B cell (primary cell): ENCODE measurements at regions of chr14 and their contacts with region 1.

Region 1: DNA sequence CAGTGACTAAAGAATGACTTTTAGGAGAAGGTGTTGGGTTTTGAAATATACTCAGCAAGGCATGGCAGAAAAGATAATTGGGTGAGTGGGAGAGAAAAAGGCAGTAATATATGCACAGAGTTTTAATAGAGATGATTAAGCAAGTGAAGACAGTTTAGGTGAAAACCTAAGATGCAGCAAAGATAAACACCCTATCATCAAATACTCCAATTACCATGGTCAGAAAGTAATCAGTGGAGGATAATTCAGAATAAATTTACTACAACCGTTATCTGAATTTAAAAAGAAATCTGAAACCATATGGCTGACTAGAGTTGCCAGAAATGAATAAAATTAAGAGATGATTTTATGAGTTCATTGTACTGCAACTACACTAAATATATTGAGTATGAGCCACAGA is 26.8 kb downstream of the NAA30 start:
- DNase-seq: no peak
- ATAC-seq: no peak
- H3K4me3 ChIP-seq: no peak overlapping the region
- H3K4me3 Mint-ChIP-seq: no peak overlapping the region
- H3K27ac ChIP-seq: no peak overlapping the region
- H3K27ac Mint-ChIP-seq: no peak overlapping the region
- H3K4me1 ChIP-seq: no peaks in the 10 kb centered on the region
- H3K4me1 Mint-ChIP-seq: no peaks in the 10 kb centered on the region
- H3K27me3 ChIP-seq: no peaks in the 10 kb centered on the region
- H3K27me3 Mint-ChIP-seq: no peaks in the 10 kb centered on the region
- CTCF ChIP-seq: no peak

Region 2: DNA sequence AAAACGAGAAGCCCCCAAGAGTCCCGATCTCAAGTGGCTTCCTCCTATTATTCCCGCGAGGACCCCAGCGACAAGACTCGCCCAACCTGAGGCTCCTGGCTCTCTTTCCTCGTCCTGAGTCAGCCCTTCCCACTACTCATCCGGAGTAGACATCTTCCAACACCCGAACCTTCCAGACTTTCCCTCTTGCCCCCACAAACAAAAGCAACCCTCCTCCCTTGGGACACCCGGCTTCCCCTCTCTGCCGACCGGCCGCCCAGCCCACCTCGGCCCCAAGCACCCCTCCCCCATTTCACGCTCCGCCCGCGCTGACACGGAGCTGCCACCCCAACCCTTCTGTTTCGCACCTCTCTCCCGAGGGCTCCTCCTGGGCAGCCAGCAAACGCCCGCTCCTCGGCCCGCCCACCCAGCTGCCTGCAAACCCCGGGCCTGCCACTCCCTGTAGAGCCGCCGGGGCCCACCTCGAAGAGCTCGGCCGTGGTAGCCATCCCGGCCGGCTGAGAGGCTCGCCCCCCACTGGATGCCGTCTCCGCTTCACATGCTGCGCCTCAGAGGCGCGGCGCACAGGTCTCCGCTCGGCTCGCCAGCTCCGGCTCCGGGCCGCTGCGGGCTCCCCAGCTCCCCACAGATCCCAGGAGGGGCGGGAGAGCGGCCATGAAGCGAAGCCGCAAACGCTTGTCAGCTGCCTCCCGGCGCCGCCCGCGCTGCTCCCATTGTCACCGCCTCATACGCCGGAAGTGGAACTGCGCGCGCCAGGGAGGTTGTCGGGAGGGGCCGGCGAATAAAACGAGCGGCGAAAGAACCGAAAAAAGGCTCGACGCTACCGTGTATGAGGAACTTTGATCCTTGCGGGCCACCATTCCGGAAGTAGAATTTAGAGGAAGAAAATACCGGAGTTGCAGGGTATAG is 148.8 kb before region 1 on chr14 and contains the starts of genes AP5M1 and EXOC5:
- CTCF ChIA-PET with region 1: no interaction called
- POLR2A ChIA-PET with region 1: no interaction called
- intact Hi-C with region 1: no loop called
- DNase-seq: peak; percentile 96
- ATAC-seq: peak; percentile 79
- H3K4me3 ChIP-seq: peak within 1 kb of the TSS; percentile 77 to 98 (median 86)
- H3K4me3 Mint-ChIP-seq: peak within 1 kb of the TSS; percentile 100
- H3K27ac ChIP-seq: peak within 1 kb of the TSS; percentile 74 to 90
- H3K27ac Mint-ChIP-seq: peak within 1 kb of the TSS; percentile 100
- H3K4me1 ChIP-seq: peaks cover 20% of the 10 kb centered on the region in 2 donors
- H3K4me1 Mint-ChIP-seq: peaks cover 48% of the 10 kb centered on the region
- H3K27me3 ChIP-seq: no peaks in the 10 kb centered on the region
- H3K27me3 Mint-ChIP-seq: no peaks in the 10 kb centered on the region
- CTCF ChIP-seq: no peak
- total RNA-seq, gene AP5M1: 53.6 and 54.9 TPM in 2 replicates
- total RNA-seq, gene EXOC5: 56.6 and 60.0 TPM in 2 replicates

Region 3: DNA sequence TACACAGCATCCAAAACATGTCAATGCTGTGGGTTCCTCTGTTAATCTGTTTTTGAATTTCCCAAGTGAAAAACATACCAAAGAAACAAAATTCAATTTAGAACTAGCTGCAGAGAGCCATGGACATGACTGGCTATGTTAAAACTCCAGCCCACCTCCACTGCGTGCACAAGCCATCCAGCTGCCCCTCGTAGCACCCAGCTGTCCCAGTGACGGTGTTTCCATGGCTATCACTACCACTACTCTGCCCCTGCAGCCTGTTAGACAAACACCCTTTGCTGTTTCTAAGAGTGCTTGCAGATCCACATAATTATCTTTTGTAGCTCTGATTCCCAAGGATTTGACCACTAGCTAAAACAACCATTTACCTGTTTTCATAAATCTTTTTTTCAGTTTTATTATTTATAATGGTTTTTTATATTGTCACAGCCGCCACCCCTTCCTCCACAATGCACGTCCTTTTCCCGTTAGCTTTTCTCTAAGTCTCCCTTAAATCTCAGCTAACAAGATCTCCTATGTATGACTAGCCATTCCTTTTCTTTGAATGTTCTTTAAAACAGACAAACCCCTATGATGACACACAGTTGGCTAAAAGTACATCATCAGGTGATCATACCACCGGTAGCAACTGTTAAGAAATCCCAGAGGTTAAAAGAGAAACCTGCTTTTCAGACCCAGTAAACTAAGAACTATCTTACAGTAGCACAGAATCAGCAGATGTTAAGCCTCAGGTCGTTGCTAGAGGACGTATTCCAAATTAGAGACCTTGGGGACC is 64.6 kb before region 1 on chr14:
- CTCF ChIA-PET with region 1: no interaction called
- POLR2A ChIA-PET with region 1: no interaction called
- intact Hi-C with region 1: loop called (anchors 2 kb)
- DNase-seq: no peak
- ATAC-seq: no peak
- H3K4me3 ChIP-seq: no peak overlapping the region
- H3K4me3 Mint-ChIP-seq: no peak overlapping the region
- H3K27ac ChIP-seq: no peak overlapping the region
- H3K27ac Mint-ChIP-seq: no peak overlapping the region
- H3K4me1 ChIP-seq: no peaks in the 10 kb centered on the region
- H3K4me1 Mint-ChIP-seq: no peaks in the 10 kb centered on the region
- H3K27me3 ChIP-seq: no peaks in the 10 kb centered on the region
- H3K27me3 Mint-ChIP-seq: peaks cover 22% of the 10 kb centered on the region
- CTCF ChIP-seq: no peak

Region 4: GRCh38 chr14:57364659-57365450 is 52.4 kb before region 1 on chr14:
- CTCF ChIA-PET with region 1: no interaction called
- POLR2A ChIA-PET with region 1: no interaction called
- intact Hi-C with region 1: no loop called
- DNase-seq: no peak
- ATAC-seq: no peak
- H3K4me3 ChIP-seq: no peak overlapping the region
- H3K4me3 Mint-ChIP-seq: no peak overlapping the region
- H3K27ac ChIP-seq: no peak overlapping the region
- H3K27ac Mint-ChIP-seq: no peak overlapping the region
- H3K4me1 ChIP-seq: no peaks in the 10 kb centered on the region
- H3K4me1 Mint-ChIP-seq: no peaks in the 10 kb centered on the region
- H3K27me3 ChIP-seq: peaks cover 0 to 15% (median 0%) of the 10 kb centered on the region in 4 experiments
- H3K27me3 Mint-ChIP-seq: peaks cover 45% of the 10 kb centered on the region
- CTCF ChIP-seq: no peak